ENCODE measurements at regions of chr7 and their contacts with region 1.

Region 1: GRCh38 chr7:156640257-156640948 is at the start of gene RNF32:
- DNase-seq: peak; percentile 93
- H3K4me3 ChIP-seq: peak within 1 kb of the TSS; percentile 82
- H3K27ac ChIP-seq: peak within 1 kb of the TSS; percentile 51
- H3K4me1 ChIP-seq: peaks cover 19% of the 10 kb centered on the region
- CTCF ChIP-seq: no peak
- total RNA-seq, gene RNF32: 3.2 and 3.8 TPM in 2 replicates

Region 2: DNA sequence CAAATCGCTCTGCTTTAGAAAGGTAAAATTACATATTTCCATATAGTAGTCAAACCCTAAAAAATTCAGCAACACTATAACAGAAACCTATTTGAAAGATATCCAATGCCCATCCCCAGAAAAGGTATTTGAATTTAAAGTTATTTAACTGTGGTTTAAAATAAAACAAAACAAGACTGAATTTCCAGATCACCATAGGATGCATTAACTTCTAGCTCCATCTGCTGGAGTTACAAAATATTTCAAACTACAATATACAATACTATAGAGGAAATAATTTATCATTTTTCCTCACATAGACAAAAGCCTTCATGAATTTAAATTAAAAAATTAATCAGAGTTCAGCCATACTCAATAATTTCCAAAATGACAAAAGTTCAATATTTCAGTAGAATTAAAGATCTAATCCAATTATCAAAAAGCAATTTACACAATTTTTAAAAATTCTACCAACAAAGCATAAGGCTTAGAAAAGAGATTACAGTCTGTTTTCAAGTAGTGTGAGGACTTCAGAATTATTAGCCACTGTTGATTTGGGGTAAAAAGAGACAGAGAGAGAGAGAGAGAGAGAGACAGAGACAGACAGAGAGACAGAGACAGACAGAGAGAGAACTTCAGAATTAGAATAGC is 176.7 kb after region 1 on chr7:
- CTCF ChIA-PET with region 1: no interaction called
- POLR2A ChIA-PET with region 1: no interaction called
- intact Hi-C with region 1: loop called (anchors 10 kb)
- DNase-seq: peak; percentile 33
- H3K4me3 ChIP-seq: no peak overlapping the region
- H3K27ac ChIP-seq: no peak overlapping the region
- H3K4me1 ChIP-seq: peaks cover 5% of the 10 kb centered on the region
- CTCF ChIP-seq: peak; percentile 88